GM10248 (cell line): ENCODE measurements at regions of chr4 and their contacts with region 1.

Region 1: GRCh38 chr4:138182838-138183426 is 59.2 kb downstream of the SLC7A11 start:
- DNase-seq: peak; percentile 10
- CTCF ChIP-seq: peak; percentile 65

Region 2: GRCh38 chr4:137541876-137542646 is 640.9 kb before region 1 on chr4:
- CTCF ChIA-PET with region 1: no interaction called
- POLR2A ChIA-PET with region 1: no interaction called
- DNase-seq: no peak
- CTCF ChIP-seq: no peak

Region 3: GRCh38 chr4:137794764-137795254 is 388.1 kb before region 1 on chr4:
- CTCF ChIA-PET with region 1: no interaction called
- POLR2A ChIA-PET with region 1: no interaction called
- DNase-seq: no peak
- CTCF ChIP-seq: no peak

Region 4: GRCh38 chr4:138035781-138036258 is 147.1 kb before region 1 on chr4:
- CTCF ChIA-PET with region 1: interaction called, 17 read pairs
- POLR2A ChIA-PET with region 1: no interaction called
- DNase-seq: peak; percentile 56
- CTCF ChIP-seq: peak; percentile 50

Region 5: GRCh38 chr4:138193963-138194362 is 11.0 kb after region 1 on chr4:
- CTCF ChIA-PET with region 1: interaction called, 17 read pairs
- POLR2A ChIA-PET with region 1: no interaction called
- DNase-seq: no peak
- CTCF ChIP-seq: no peak

Region 6: GRCh38 chr4:138609943-138610350 is 427.0 kb after region 1 on chr4:
- CTCF ChIA-PET with region 1: no interaction called
- POLR2A ChIA-PET with region 1: no interaction called
- DNase-seq: peak; percentile 28
- CTCF ChIP-seq: no peak